ENCODE measurements at regions of chr14 and their contacts with region 1.

Region 1: DNA sequence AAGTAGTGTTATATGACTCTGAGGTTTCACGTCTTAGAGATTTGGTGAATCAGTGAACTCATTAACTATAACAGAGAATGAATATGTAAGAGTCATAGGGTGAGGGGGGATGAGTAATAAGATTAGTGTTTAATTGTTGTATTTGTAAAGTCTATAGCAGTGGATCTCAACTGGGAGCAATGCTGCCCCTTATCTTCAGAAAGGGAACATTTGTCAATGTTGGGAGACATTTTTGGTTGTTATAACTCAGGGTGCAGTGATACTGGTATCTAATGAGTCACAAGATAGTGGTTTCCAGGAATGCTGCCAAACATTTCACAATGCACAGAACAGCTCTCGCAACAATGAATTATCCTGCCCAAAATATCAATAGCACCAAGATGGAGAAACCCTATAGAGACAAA is 1193.7 kb downstream of the GALC start:
- DNase-seq: peak; percentile 93
- H3K4me3 Mint-ChIP-seq: no peak overlapping the region
- H3K27ac Mint-ChIP-seq: peak overlapping the region; percentile 58
- H3K4me1 Mint-ChIP-seq: peaks cover 12% of the 10 kb centered on the region
- H3K27me3 Mint-ChIP-seq: no peaks in the 10 kb centered on the region
- CTCF ChIP-seq: no peak

Region 2: DNA sequence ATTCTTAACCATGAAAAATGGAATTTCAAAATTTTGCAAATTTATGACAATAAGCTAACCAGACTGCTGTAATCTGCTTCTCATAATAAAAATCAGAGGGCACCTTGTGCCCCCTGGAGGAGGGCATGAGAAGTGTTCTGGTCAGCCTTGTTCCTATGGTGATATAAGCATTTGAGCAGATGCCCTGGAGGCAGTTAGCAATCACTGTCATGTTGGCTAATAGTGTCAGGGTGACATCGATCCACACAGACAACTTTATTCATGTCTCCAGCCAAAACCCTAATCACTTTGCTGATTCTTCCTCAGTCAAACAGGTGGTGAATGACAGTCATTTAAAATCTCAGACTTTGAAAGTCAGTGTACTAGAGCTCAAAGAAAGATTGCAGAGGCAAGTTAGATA is 250.7 kb after region 1 on chr14:
- CTCF ChIA-PET with region 1: no interaction called
- POLR2A ChIA-PET with region 1: no interaction called
- intact Hi-C with region 1: loop called (anchors 10 kb)
- DNase-seq: peak; percentile 81
- H3K4me3 Mint-ChIP-seq: no peak overlapping the region
- H3K27ac Mint-ChIP-seq: no peak overlapping the region
- H3K4me1 Mint-ChIP-seq: peaks cover 5% of the 10 kb centered on the region
- H3K27me3 Mint-ChIP-seq: no peaks in the 10 kb centered on the region
- CTCF ChIP-seq: peak; percentile 61